Sigmoid colon (tissue), 7 donors: ENCODE measurements at regions of chr3 and their contacts with region 1.

Region 1: DNA sequence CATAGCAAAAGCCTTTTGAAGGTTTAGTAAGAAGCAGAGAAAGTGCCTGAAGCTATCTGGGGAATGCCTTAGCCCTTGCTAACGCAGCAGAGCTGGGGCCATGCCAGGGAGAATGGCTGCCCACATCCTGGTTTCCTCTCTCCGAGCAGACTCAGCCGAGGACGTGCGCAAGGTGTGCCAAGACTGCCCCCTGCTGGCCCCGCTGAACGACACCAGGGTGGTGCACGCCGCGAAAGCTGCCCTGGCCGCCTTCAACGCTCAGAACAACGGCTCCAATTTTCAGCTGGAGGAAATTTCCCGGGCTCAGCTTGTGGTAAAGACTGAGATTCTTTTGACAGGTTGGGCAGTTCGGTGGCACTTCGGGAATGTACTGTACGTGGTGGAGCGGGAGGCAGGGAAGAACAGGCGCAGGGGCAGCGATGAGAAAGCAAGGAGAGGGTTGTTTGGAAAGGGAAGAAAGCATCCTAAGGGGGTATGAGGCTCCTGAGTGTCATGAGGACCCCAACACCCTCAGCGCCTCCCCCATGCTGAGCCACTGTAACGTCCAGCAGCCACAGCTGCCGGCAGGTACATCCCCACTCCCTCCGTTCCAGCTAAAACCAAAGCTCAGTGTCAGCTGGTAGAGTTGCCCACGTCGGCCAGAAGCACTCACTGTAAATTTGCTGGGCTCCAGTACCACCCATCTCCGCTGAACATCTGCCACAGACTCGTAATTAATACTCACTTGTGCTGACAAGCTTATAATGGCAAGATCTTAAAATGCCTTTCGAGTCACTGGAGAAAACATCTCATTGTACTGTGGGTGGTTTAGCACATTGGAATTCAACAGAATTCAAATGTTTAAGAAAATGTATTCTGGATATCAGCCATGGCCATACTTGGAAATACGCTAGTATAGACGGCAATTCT is 4.4 kb downstream of the AHSG start:
- DNase-seq: peak; percentile 87
- H3K4me3 ChIP-seq: peak overlapping the region in 2 of 4 donors; percentile 14 to 23
- H3K27ac ChIP-seq: peak overlapping the region in 1 of 4 donors; percentile 43
- H3K4me1 ChIP-seq: peaks cover 0 to 10% (median 8%) of the 10 kb centered on the region in 4 donors
- H3K27me3 ChIP-seq: peaks cover 0 to 30% (median 0%) of the 10 kb centered on the region in 3 donors
- CTCF ChIP-seq: peak; percentile 18 to 80 (median 70)
- EP300 ChIP-seq: no peak
- POLR2A ChIP-seq: no peak

Region 2: GRCh38 chr3:185983495-185984141 is 633.7 kb before region 1 on chr3:
- intact Hi-C with region 1: loop called (anchors 5 kb)
- DNase-seq: peak; percentile 83
- H3K4me3 ChIP-seq: no peak overlapping the region
- H3K27ac ChIP-seq: no peak overlapping the region
- H3K4me1 ChIP-seq: peaks cover 0 to 6% (median 4%) of the 10 kb centered on the region in 4 donors
- H3K27me3 ChIP-seq: peaks cover 0 to 11% (median 6%) of the 10 kb centered on the region in 3 donors
- CTCF ChIP-seq: peak; percentile 60 to 90 (median 86)
- EP300 ChIP-seq: no peak
- POLR2A ChIP-seq: no peak

Region 3: DNA sequence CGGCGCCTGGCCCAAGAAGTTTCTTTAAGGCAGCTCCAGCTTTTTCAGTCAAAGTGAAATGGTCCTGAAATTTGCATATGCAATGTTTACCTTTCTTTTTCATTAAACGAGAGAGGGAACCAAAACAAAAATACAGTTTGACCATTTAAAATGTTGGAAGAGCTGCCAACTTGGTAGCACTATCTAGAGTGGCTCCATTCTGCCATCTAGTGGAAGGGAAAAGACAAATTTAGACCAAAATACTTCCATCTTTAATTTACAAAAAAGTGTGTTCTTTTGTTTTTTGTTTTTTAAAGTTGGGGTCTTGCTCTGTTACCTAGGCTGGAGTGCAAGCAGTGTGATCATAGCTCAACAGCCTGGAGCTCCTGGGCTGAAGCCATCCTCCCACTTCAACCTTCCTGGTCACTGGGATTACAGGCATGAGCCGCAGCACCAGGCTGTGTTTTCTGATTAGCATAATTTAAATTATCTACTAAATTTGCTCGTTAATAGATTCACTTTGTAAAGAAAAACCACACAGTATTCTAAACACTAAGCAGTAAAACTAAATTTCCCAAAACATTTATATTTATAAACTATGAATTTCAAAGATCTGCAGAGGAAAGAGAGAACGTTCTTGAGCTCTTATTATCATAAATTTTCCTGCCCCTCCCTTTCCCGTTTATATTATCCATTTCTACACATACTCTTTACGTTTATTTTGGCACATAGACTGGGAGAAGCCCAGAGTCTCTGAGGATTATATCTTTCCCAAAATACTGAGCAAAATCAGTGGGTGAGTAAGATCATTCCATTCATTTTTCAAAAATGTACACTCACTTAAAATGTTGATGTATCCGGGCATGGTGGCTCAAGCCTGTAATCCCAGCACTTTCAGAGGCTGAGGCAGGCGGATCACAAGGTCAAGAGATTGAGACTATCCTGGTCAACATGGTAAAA is 204.4 kb after region 1 on chr3:
- intact Hi-C with region 1: loop called (anchors 2 kb)
- DNase-seq: no peak
- H3K4me3 ChIP-seq: no peak overlapping the region
- H3K27ac ChIP-seq: no peak overlapping the region
- H3K4me1 ChIP-seq: peaks cover 0 to 17% (median 8%) of the 10 kb centered on the region in 4 donors
- H3K27me3 ChIP-seq: peaks cover 15 to 28% (median 16%) of the 10 kb centered on the region in 3 donors
- CTCF ChIP-seq: peak in 3 of 4 experiments; percentile 25 to 48 (median 37)
- EP300 ChIP-seq: no peak
- POLR2A ChIP-seq: no peak

Region 4: DNA sequence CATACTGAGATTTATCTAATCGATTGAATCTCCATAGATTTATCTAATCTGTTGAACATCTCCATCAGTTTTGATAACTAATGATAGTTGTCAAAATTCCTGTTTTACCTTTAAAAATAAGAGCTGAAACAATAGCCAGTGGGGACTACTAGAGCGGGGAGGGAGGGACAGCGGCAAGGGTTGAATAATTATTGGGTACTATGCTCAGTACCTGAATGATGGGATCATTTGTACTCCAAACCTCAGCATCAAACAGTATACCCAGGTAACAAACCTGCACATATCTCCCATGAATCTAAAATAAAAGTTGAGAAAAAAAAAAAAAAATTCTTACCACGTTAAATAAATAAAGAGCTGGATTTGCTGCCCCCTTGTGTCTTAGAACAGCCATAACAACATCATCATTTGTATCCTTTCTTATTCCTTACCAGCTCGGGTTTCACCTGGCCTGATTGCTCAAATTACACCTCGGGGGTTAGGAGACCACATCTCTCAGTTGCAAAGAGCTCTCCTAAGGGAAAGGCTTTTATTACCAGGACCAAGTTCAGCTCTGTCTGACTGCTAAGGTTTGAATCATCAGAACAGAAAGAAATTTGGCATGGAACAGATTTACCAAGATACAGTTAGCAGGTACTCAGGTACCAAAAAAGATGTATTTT is 547.7 kb after region 1 on chr3:
- intact Hi-C with region 1: loop called (anchors 5 kb)
- DNase-seq: no peak
- H3K4me3 ChIP-seq: no peak overlapping the region
- H3K27ac ChIP-seq: no peak overlapping the region
- H3K4me1 ChIP-seq: peaks cover 0 to 21% (median 10%) of the 10 kb centered on the region in 4 donors
- H3K27me3 ChIP-seq: no peaks in the 10 kb centered on the region
- CTCF ChIP-seq: peak; percentile 60 to 72 (median 69)
- EP300 ChIP-seq: no peak
- POLR2A ChIP-seq: no peak

Region 5: DNA sequence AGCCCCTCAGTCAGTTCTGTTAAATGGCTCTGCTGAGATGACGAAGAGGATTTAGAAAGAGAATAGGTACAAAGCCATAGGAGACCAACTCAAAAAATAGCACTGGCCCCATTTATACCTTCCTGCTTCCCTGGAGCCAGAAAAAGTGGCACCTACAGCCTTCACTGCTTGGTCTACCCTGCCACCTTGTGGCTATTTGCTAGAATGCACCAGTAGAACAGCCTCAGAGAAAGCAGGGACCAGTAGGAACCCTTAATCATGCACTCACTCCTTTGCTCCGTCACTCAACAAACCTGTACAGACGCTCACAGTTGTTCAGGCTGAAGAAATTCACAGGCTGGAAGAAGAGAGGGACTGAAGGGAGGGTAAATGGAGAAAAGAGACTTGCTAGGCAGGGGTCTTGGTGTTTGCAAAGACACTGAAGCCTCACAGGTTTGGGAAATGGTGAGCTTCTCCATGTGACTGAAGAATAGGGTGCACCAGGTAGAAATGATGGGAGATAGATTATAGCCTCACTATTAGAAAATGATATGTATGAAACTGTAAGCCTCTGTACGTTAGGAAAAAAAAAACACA is 1097.2 kb after region 1 on chr3:
- intact Hi-C with region 1: loop called (anchors 2 kb)
- DNase-seq: peak; percentile 80
- H3K4me3 ChIP-seq: no peak overlapping the region
- H3K27ac ChIP-seq: no peak overlapping the region
- H3K4me1 ChIP-seq: peaks cover 0 to 10% (median 3%) of the 10 kb centered on the region in 4 donors
- H3K27me3 ChIP-seq: no peaks in the 10 kb centered on the region
- CTCF ChIP-seq: peak; percentile 86 to 93 (median 92)
- EP300 ChIP-seq: no peak
- POLR2A ChIP-seq: no peak